CD8-positive, alpha-beta memory T cell (primary cell): ENCODE measurements at regions of chr1 and their contacts with region 1.

Region 1: GRCh38 chr1:150578965-150579798 is at the start of gene MCL1:
- DNase-seq: peak; percentile 74 to 93 (median 84)
- H3K4me3 ChIP-seq: peak within 1 kb of the TSS; percentile 76
- H3K4me3 Mint-ChIP-seq: peak within 1 kb of the TSS; percentile 96 to 100 (median 99)
- H3K27ac ChIP-seq: peak within 1 kb of the TSS; percentile 99
- H3K27ac Mint-ChIP-seq: peak within 1 kb of the TSS; percentile 94 to 100 (median 98)
- H3K4me1 ChIP-seq: peaks cover 7% of the 10 kb centered on the region
- H3K4me1 Mint-ChIP-seq: peaks cover 33 to 41% (median 40%) of the 10 kb centered on the region in 3 donors
- H3K27me3 ChIP-seq: no peaks in the 10 kb centered on the region
- H3K27me3 Mint-ChIP-seq: peaks cover 0 to 18% of the 10 kb centered on the region in 2 donors
- total RNA-seq, gene MCL1: 211 to 216 TPM

Region 2: DNA sequence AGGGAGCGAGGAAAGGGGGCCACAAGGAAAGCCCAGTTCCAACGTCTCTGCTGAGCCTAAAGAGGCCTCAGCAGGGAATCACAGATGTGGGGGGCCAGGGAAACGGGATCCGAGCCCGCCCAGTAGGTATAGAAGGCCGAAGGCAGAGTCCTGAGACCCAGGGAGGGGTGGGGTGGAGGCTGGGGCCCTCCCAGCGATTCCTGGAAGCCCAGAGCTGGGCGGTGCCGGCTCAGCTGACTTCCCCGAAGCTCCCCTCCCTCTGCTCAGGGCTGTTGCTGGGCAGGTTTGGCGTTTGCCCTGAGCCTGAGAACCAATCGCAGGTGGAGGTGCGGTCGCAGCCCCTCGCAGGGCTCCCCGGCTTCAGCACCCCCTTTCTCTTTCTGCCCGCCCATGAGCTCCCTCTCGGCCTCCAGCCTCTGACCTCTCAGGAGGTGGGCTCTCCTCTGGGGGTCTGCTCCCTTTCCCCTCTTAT is 17.2 kb before region 1 on chr1:
- CTCF ChIA-PET with region 1: interaction called, 325 read pairs
- POLR2A ChIA-PET with region 1: interaction called, 486 read pairs
- DNase-seq: peak; percentile 60 to 83 (median 70)
- H3K4me3 ChIP-seq: peak overlapping the region; percentile 91
- H3K4me3 Mint-ChIP-seq: peak overlapping the region; percentile 85 to 98 (median 97)
- H3K27ac ChIP-seq: peak overlapping the region; percentile 94
- H3K27ac Mint-ChIP-seq: peak overlapping the region; percentile 96 to 100 (median 98)
- H3K4me1 ChIP-seq: peaks cover 64% of the 10 kb centered on the region
- H3K4me1 Mint-ChIP-seq: peaks cover 59 to 69% (median 59%) of the 10 kb centered on the region in 3 donors
- H3K27me3 ChIP-seq: no peaks in the 10 kb centered on the region
- H3K27me3 Mint-ChIP-seq: no peaks in the 10 kb centered on the region

Region 3: GRCh38 chr1:150613061-150613920 is 34.1 kb after region 1 on chr1:
- CTCF ChIA-PET with region 1: interaction called, 4 read pairs
- POLR2A ChIA-PET with region 1: interaction called, 18 read pairs
- DNase-seq: peak in 4 of 5 donors; percentile 36 to 70 (median 51)
- H3K4me3 ChIP-seq: no peak overlapping the region
- H3K4me3 Mint-ChIP-seq: peak overlapping the region; percentile 27 to 75 (median 59)
- H3K27ac ChIP-seq: peak overlapping the region; percentile 76
- H3K27ac Mint-ChIP-seq: peak overlapping the region; percentile 94 to 100 (median 99)
- H3K4me1 ChIP-seq: peaks cover 51% of the 10 kb centered on the region
- H3K4me1 Mint-ChIP-seq: peaks cover 50 to 72% (median 56%) of the 10 kb centered on the region in 3 donors
- H3K27me3 ChIP-seq: no peaks in the 10 kb centered on the region
- H3K27me3 Mint-ChIP-seq: no peaks in the 10 kb centered on the region

Region 4: DNA sequence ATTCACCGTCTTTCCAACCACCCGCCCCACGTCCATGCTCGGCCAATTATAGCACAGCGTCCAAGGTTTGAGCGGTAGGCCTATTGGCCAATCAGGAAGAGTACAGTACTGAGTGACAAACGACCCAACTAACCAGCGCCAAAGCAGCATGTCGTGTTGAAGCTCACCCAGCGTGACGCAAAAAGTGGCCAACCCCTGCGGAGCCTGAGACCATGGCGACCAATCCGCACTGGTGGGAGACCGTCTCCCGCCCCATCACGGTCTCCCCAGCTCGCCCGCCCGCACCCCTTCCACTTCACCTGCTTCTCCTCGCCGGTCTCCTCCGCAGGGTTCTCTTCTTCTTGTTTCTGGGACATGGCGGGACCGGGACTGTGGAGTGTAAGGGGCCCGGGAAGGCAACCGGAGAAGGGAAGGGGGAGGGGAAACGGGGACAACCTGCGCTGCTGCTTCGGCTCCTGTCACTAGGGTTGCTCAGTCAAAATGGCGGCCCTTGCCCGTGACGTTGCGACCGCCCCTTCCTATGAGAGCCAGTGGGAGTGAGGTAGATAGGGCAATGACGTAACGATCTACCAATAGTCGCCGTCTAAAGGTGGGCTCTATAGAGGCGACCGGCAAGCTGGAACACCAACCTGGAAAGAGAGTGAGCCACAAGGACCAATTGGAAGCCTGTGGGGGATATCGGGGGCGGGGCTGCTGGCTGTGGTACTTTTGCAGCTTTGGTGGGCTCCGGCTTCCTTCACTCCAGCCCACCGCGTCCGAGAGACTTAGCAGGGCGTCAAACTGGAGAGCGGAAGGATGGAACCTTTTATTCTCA is 50.1 kb after region 1 on chr1 and contains the start of gene ENSA:
- CTCF ChIA-PET with region 1: interaction called, 13 read pairs
- POLR2A ChIA-PET with region 1: interaction called, 42 read pairs
- DNase-seq: peak; percentile 94 to 99 (median 98)
- H3K4me3 ChIP-seq: peak within 1 kb of the TSS; percentile 75
- H3K4me3 Mint-ChIP-seq: no peak within 1 kb of the TSS
- H3K27ac ChIP-seq: peak within 1 kb of the TSS; percentile 92
- H3K27ac Mint-ChIP-seq: peak within 1 kb of the TSS in 1 of 8 donors; percentile 80
- H3K4me1 ChIP-seq: peaks cover 21% of the 10 kb centered on the region
- H3K4me1 Mint-ChIP-seq: peaks cover 10 to 21% (median 19%) of the 10 kb centered on the region in 3 donors
- H3K27me3 ChIP-seq: no peaks in the 10 kb centered on the region
- H3K27me3 Mint-ChIP-seq: no peaks in the 10 kb centered on the region
- total RNA-seq, gene ENSA: 249 to 252 TPM

Region 5: DNA sequence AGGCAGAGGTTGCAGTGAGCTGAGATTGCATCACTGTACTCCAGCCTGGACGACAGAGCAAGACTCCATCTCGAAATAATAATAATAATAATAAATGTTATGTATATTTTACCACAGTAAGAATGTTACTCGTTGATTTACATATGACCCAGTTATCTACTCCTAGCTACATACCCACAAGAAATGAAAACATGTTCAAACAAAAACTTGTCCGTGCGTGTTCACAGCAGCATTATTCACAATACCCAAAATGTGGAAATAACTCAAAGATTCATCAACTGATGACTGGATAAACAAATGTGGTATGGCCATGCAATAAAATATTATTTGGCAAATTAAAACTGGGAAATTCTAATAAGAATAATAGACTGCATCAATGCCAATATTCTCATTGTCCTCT is 82.0 kb after region 1 on chr1:
- CTCF ChIA-PET with region 1: no interaction called
- POLR2A ChIA-PET with region 1: no interaction called
- DNase-seq: no peak
- H3K4me3 ChIP-seq: no peak overlapping the region
- H3K4me3 Mint-ChIP-seq: no peak overlapping the region
- H3K27ac ChIP-seq: no peak overlapping the region
- H3K27ac Mint-ChIP-seq: no peak overlapping the region
- H3K4me1 ChIP-seq: no peaks in the 10 kb centered on the region
- H3K4me1 Mint-ChIP-seq: peaks cover 0 to 6% (median 0%) of the 10 kb centered on the region in 3 donors
- H3K27me3 ChIP-seq: no peaks in the 10 kb centered on the region
- H3K27me3 Mint-ChIP-seq: peaks cover 0 to 2% of the 10 kb centered on the region in 2 donors